Head of caudate nucleus (tissue), 42 donors: ENCODE measurements at regions of chr22 and their contacts with region 1.

Region 1: DNA sequence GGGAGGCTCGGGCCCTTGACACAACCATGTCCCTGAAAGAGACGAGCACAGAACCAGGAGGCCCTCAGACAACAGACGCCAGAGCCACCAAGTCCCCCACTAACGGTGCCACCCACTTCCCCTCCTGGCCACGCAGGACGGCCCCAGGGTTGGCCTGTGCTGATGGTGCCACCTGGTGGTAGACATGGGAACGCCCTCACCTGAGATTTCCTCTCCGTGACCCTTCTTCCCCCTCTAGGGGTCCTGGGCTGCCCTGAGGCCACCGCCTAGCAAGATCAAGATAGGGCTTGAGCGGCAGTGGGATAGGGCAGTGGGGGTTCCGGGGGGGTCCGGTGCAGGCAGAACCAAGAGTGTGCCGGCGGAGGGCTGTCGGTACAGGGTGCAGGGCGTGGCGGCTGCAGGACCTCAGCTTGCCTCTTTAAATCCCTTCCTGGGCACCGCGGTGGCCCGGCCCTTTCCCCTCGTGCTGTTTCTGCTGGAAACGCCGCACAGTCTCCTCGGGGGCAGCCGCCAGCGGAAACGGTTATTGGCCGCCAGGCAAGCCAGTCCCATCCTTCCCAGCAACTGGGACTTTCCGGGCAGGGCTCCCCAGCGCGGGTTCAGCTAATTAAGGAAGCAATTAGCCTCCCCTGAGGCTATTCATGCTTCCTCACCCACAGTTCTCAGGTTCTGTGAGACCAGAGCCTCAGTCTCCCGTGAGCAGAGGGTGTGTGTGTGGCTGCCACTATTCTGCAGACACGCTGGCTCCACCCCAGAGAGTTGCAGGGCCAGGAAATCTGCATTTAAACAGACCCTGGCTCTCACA is 5.5 kb upstream of the NFAM1 start:
- DNase-seq: peak; percentile 56 to 91 (median 78)

Region 2: GRCh38 chr22:42090596-42091454 is 346.9 kb before region 1 on chr22 and contains the start of gene NDUFA6:
- intact Hi-C with region 1: loop called (anchors 10 kb)
- DNase-seq: peak; percentile 97 to 100 (median 99)

Region 3: DNA sequence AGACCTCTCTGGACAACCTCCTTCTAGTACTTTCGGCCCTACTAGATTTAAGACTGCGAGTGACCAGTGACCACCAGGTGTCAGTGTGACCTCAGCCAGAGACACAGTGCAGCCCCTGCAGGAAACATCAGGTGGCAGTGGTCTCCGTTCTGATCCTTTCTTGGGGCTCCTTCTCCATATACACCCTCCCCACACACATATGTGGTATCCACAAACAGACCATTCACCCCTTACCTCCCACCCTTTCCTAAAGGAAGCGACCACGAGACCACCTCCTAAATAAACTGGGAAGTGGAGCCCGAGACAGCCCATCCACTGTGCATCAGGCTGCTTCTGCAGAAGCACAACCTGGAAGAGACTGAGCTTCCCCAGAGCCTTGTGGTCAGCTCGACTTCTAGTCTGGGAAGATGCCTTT is 268.6 kb before region 1 on chr22:
- intact Hi-C with region 1: loop called (anchors 2 kb)
- DNase-seq: peak; percentile 25 to 92 (median 77)

Region 4: DNA sequence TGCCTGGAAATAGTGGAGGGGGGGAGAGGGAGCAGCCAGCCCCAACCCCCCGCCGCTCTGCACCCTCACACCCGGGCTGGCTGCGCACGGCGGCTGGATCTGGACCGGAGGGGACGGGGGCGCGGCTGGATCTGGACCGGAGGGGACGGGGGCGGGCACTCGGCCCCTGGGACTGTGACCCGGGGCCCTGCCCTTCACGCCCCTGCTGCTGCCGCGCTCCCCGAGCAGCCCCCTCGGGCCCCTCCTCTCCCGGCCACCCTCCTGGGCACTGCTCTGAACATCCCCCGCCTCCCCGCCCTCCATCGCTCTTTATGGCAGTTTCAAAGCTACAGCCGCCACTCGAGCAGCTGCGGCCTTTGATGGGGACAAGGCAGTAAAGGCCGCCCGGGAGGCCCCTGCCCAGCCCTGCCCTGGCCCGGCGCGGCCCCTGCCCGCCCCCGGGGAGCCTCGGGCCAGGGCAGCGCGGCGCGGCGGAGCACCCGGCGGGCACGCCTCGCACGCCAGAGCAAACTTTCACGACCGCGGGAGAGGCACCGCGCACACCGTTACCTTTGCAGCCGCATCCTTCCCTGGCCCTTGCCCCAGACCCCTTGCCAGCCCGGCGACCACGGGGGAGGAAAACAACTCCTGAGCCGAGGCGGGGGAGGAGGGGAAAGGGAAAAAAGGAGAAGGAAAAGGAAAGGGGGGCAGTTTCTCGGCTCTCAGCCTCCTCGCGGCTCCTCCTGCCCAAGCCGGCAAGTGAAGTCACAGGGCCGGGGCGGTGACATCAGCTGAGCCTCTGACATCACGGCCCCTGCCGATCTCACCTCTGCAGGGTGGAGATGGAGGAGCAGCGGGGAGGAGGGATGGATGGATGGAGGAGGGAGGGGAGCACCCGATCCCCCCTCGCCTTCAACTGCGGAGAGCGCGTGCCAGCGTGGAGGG is 154.2 kb before region 1 on chr22:
- intact Hi-C with region 1: loop called (anchors 5 kb)
- DNase-seq: peak in 39 of 42 donors; percentile 22 to 76 (median 51)

Region 5: GRCh38 chr22:42343551-42344081 is 94.1 kb before region 1 on chr22:
- intact Hi-C with region 1: loop called (anchors 10 kb)
- DNase-seq: peak in 18 of 42 donors; percentile 22 to 72 (median 51)